Left ventricle myocardium inferior (tissue), 1 donor: ENCODE measurements at regions of chr17 and their contacts with region 1.

Region 1: GRCh38 chr17:49575579-49576087 is at the start of gene NXPH3:
- DNase-seq: peak; percentile 75
- H3K4me3 ChIP-seq: peak within 1 kb of the TSS; percentile 82
- H3K27ac ChIP-seq: peak within 1 kb of the TSS; percentile 75
- H3K4me1 ChIP-seq: peaks cover 52% of the 10 kb centered on the region
- H3K27me3 ChIP-seq: no peaks in the 10 kb centered on the region
- CTCF ChIP-seq: peak; percentile 78
- total RNA-seq, gene NXPH3: 4.0 TPM

Region 2: DNA sequence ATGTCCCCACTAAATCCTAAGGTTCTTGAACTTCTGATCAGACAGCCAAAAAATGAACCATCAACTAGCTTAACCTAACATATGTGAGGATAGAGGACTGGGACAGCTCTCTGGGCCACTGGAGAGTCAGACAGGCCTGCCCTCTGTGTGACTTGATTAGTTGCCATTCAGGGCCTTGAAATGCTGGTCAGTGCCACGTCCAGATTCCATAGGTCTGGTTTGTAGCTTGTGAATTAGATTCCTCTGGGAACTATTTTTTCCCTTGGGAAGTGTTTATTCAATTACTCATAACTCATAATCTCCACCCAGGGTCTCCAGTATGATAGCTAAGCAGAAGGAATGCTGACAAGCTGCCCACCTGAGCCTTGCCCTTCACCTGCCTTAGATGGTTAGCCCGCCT is 530.3 kb before region 1 on chr17:
- intact Hi-C with region 1: no loop called
- DNase-seq: no peak
- H3K4me3 ChIP-seq: no peak overlapping the region
- H3K27ac ChIP-seq: no peak overlapping the region
- H3K4me1 ChIP-seq: no peaks in the 10 kb centered on the region
- H3K27me3 ChIP-seq: peaks cover 88% of the 10 kb centered on the region
- CTCF ChIP-seq: no peak

Region 3: DNA sequence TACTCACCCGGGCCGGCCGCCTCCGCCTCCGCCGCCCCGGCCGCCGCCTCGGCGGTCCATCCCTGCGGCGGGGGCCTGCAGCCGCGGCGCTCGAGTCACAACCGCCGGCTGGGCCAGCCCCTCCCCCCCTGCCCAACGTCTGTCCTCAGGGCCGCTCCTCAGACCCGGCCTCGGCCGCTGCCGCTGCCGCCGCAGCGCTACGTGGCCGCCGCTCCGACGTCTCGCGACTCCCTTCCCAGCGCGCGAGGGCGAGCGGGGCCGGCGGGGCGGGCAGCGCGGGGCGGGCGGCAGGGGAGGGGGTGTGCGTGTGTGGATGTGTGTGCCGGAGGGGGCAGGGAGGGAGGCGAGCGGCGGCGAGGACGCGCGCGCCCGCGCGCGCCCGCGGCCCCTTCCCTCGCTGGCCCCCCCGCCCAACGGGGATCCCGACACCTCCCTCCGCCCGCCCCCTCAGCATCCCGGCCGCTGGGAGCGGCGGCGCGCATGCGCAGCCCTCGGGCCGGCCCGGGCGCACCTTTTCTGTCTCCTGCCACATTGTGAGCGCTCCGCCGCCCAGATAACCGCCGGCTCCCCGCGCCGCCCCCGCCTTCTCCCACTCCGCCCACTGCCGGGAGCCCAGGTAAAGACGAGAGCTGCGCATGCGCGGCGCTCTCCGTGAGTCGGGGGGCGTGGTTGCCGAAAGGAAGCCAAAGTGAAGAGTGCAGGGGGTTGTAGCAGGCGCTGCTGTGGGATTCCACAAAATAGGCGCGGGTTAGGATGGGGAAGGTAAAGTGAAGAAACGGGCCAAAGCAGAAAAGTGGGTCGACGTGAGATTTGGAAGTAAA is 213.5 kb before region 1 on chr17 and contains the start of gene ZNF652:
- intact Hi-C with region 1: no loop called
- DNase-seq: peak; percentile 93
- H3K4me3 ChIP-seq: peak within 1 kb of the TSS; percentile 96
- H3K27ac ChIP-seq: peak within 1 kb of the TSS; percentile 96
- H3K4me1 ChIP-seq: peaks cover 49% of the 10 kb centered on the region
- H3K27me3 ChIP-seq: no peaks in the 10 kb centered on the region
- CTCF ChIP-seq: no peak
- total RNA-seq, gene ZNF652: 19.2 TPM

Region 4: DNA sequence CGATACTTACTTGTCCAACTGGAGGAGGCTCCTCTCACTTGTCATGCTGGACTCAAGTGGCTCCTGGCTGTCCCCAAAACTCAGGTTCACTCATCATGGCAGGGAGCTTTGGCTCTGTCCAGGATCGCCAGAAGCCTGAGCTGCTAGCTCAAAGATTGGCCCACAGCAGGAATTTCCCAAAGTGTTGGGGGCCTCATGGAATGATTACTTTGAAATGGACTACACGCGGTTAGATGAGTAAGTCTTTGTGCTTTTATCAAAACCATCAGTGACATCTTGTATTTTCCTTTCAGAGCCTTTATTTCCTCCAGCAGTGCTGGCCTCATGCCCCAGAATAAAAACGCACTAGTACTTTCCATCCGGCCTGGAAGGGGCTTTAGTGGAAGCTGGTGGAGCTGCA is 131.8 kb before region 1 on chr17:
- intact Hi-C with region 1: no loop called
- DNase-seq: no peak
- H3K4me3 ChIP-seq: no peak overlapping the region
- H3K27ac ChIP-seq: no peak overlapping the region
- H3K4me1 ChIP-seq: peaks cover 1% of the 10 kb centered on the region
- H3K27me3 ChIP-seq: peaks cover 83% of the 10 kb centered on the region
- CTCF ChIP-seq: no peak

Region 5: DNA sequence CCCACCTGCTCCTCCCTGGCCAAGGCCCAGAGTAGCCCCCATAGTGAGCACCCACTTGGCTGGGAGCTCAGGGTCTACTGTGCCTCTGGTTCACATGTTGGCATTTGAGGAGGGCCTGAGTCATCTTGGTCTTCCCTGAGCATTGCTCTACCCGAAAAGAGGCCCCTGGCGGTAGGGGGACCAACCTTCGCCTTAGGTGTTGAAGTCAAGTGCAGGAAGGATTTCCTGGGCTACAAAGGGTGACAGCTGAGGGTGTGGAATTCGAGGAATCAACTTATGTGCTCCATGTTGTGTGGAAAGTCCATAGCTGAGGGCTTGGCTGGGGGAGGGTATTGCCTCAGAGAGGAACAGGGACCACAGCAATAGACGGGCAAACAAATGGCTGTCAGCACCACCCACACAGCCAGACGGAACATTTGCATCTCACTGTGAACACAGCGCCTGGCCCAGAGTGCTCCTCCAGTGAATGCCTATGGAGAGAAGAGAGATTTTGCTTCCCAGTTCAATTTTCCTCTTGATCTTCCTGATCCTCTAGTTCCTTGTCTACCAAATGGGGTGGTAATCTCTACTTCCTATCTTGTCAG is 116.1 kb before region 1 on chr17:
- intact Hi-C with region 1: no loop called
- DNase-seq: no peak
- H3K4me3 ChIP-seq: no peak overlapping the region
- H3K27ac ChIP-seq: no peak overlapping the region
- H3K4me1 ChIP-seq: no peaks in the 10 kb centered on the region
- H3K27me3 ChIP-seq: peaks cover 98% of the 10 kb centered on the region
- CTCF ChIP-seq: no peak

Region 6: GRCh38 chr17:49694847-49695683 is 119.4 kb after region 1 on chr17:
- intact Hi-C with region 1: loop called (anchors 2 kb)
- DNase-seq: peak; percentile 51
- H3K4me3 ChIP-seq: no peak overlapping the region
- H3K27ac ChIP-seq: no peak overlapping the region
- H3K4me1 ChIP-seq: peaks cover 54% of the 10 kb centered on the region
- H3K27me3 ChIP-seq: no peaks in the 10 kb centered on the region
- CTCF ChIP-seq: peak; percentile 92